CD4-positive, alpha-beta T cell (primary cell): ENCODE measurements at regions of chr2 and their contacts with region 1.

Region 1: GRCh38 chr2:231104115-231104713 is 20.6 kb downstream of the HTR2B start:
- DNase-seq: peak; percentile 9 to 71 (median 51)
- ATAC-seq: peak; percentile 99
- H3K4me3 ChIP-seq: no peak overlapping the region
- H3K4me3 Mint-ChIP-seq: no peak overlapping the region
- H3K27ac ChIP-seq: no peak overlapping the region
- H3K27ac Mint-ChIP-seq: no peak overlapping the region
- H3K4me1 ChIP-seq: no peaks in the 10 kb centered on the region
- H3K4me1 Mint-ChIP-seq: peaks cover 5% of the 10 kb centered on the region
- H3K27me3 ChIP-seq: no peaks in the 10 kb centered on the region
- H3K27me3 Mint-ChIP-seq: no peaks in the 10 kb centered on the region
- CTCF ChIP-seq: peak; percentile 81

Region 2: DNA sequence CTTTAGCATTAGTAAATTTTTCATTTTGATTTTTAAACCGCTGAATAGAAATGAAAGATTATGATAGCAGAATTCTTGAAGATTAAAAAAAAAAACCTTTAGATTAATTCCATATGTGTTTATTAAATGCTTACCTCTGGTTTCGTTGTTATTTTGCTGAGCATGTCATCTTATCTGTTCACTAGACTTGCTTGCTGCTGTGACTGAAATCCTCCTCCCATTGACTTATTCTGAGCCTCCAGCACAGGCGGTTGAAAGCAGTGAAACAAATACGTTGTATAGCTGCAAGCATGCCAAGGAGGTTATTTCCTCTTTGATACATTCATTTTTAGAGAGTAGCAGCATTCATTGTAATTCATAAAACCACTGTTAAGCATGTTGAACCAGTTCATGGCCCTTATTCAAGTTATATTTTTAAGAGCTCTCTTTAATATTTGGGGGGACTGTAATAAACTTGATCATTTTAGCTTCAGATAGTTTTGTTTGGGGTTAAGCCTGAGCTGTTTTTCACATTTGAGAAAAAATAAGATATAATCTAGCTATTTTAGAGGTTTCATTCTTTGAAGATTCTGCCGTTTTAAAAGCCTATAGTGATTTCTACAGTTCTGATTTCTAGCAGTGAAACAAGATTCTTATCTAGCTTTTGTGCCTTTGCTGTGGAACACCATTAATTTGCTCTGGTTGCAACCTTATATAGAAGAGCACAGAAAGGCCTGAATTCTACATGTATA is 20.8 kb after region 1 on chr2 and contains the start of gene HTR2B:
- CTCF ChIA-PET with region 1: interaction called, 5 read pairs
- POLR2A ChIA-PET with region 1: interaction called, 7 read pairs
- intact Hi-C with region 1: loop called in 1 of 2 experiments (anchors 2 kb)
- DNase-seq: peak in 1 of 14 experiments; percentile 22
- ATAC-seq: peak; percentile 79
- H3K4me3 ChIP-seq: no peak within 1 kb of the TSS
- H3K4me3 Mint-ChIP-seq: peak within 1 kb of the TSS; percentile 81
- H3K27ac ChIP-seq: no peak within 1 kb of the TSS
- H3K27ac Mint-ChIP-seq: peak within 1 kb of the TSS; percentile 81
- H3K4me1 ChIP-seq: no peaks in the 10 kb centered on the region
- H3K4me1 Mint-ChIP-seq: peaks cover 59% of the 10 kb centered on the region
- H3K27me3 ChIP-seq: no peaks in the 10 kb centered on the region
- H3K27me3 Mint-ChIP-seq: no peaks in the 10 kb centered on the region
- CTCF ChIP-seq: no peak
- total RNA-seq, gene HTR2B: 0.14 TPM in 1 of 2 experiments, not detected in the other

Region 3: GRCh38 chr2:231161877-231162329 is 57.7 kb after region 1 on chr2:
- CTCF ChIA-PET with region 1: no interaction called
- POLR2A ChIA-PET with region 1: no interaction called
- intact Hi-C with region 1: loop called in 1 of 2 experiments (anchors 10 kb)
- DNase-seq: no peak
- ATAC-seq: no peak
- H3K4me3 ChIP-seq: no peak overlapping the region
- H3K4me3 Mint-ChIP-seq: no peak overlapping the region
- H3K27ac ChIP-seq: no peak overlapping the region
- H3K27ac Mint-ChIP-seq: no peak overlapping the region
- H3K4me1 ChIP-seq: peaks cover 6% of the 10 kb centered on the region
- H3K4me1 Mint-ChIP-seq: peaks cover 10% of the 10 kb centered on the region
- H3K27me3 ChIP-seq: no peaks in the 10 kb centered on the region
- H3K27me3 Mint-ChIP-seq: no peaks in the 10 kb centered on the region
- CTCF ChIP-seq: no peak

Region 4: GRCh38 chr2:231411831-231412617 is 307.8 kb after region 1 on chr2:
- CTCF ChIA-PET with region 1: no interaction called
- POLR2A ChIA-PET with region 1: interaction called, 3 read pairs
- intact Hi-C with region 1: loop called in 1 of 2 experiments (anchors 5 kb)
- DNase-seq: peak in 13 of 14 experiments; percentile 11 to 69 (median 58)
- ATAC-seq: peak; percentile 94
- H3K4me3 ChIP-seq: no peak overlapping the region
- H3K4me3 Mint-ChIP-seq: peak overlapping the region; percentile 80
- H3K27ac ChIP-seq: no peak overlapping the region
- H3K27ac Mint-ChIP-seq: no peak overlapping the region
- H3K4me1 ChIP-seq: peaks cover 6% of the 10 kb centered on the region
- H3K4me1 Mint-ChIP-seq: peaks cover 1% of the 10 kb centered on the region
- H3K27me3 ChIP-seq: peaks cover 37 to 38% of the 10 kb centered on the region in 2 experiments
- H3K27me3 Mint-ChIP-seq: peaks cover 41% of the 10 kb centered on the region
- CTCF ChIP-seq: peak; percentile 44

Region 5: DNA sequence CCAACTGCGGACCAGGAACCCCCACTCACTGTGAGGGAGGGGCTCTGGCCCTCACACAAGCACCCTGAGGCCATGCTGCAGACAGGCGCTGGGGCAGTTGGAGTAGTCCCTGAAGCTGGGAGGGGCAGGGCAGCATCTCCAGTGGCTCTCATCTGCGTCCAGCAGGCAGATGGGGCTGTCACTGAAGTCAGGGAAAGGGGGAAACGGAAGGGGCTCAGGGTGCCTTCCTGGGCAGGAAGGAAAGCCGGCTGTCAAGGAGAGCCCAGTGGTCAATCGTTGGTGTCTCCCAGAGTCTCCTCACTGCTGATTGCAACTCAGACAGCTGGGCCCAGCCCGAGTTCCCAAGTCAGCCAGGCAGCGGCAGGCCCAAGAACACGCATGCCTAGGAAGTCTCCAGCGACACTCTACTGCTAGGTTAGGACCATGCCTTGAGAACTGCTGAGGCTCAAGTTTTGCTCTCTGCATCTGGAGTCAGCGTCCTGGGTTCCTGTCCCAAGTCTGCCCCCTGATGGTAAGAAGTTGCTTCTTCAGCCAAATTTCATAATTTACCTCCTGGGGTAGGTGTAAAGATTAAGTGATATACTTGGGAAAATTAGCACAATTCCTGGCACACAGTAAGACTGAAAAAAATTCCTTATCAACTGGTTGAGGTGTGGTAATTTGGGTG is 453.5 kb after region 1 on chr2:
- CTCF ChIA-PET with region 1: no interaction called
- POLR2A ChIA-PET with region 1: no interaction called
- intact Hi-C with region 1: loop called in 1 of 2 experiments (anchors 2 kb)
- DNase-seq: peak; percentile 25 to 90 (median 51)
- ATAC-seq: peak; percentile 97
- H3K4me3 ChIP-seq: no peak overlapping the region
- H3K4me3 Mint-ChIP-seq: no peak overlapping the region
- H3K27ac ChIP-seq: no peak overlapping the region
- H3K27ac Mint-ChIP-seq: no peak overlapping the region
- H3K4me1 ChIP-seq: peaks cover 23% of the 10 kb centered on the region
- H3K4me1 Mint-ChIP-seq: no peaks in the 10 kb centered on the region
- H3K27me3 ChIP-seq: no peaks in the 10 kb centered on the region
- H3K27me3 Mint-ChIP-seq: no peaks in the 10 kb centered on the region
- CTCF ChIP-seq: peak; percentile 75